Astrocyte of the cerebellum (primary cell): ENCODE measurements at regions of chr7 and their contacts with region 1.

Region 1: GRCh38 chr7:13742811-13743210 is 246.7 kb downstream of the ETV1 start:
- DNase-seq: peak; percentile 52
- H3K4me3 ChIP-seq: no peak overlapping the region
- CTCF ChIP-seq: peak; percentile 62

Region 2: GRCh38 chr7:13540429-13540828 is 202.4 kb before region 1 on chr7:
- in situ Hi-C with region 1: loop called (anchors 25 kb)
- DNase-seq: peak; percentile 1
- H3K4me3 ChIP-seq: no peak overlapping the region
- CTCF ChIP-seq: no peak

Region 3: DNA sequence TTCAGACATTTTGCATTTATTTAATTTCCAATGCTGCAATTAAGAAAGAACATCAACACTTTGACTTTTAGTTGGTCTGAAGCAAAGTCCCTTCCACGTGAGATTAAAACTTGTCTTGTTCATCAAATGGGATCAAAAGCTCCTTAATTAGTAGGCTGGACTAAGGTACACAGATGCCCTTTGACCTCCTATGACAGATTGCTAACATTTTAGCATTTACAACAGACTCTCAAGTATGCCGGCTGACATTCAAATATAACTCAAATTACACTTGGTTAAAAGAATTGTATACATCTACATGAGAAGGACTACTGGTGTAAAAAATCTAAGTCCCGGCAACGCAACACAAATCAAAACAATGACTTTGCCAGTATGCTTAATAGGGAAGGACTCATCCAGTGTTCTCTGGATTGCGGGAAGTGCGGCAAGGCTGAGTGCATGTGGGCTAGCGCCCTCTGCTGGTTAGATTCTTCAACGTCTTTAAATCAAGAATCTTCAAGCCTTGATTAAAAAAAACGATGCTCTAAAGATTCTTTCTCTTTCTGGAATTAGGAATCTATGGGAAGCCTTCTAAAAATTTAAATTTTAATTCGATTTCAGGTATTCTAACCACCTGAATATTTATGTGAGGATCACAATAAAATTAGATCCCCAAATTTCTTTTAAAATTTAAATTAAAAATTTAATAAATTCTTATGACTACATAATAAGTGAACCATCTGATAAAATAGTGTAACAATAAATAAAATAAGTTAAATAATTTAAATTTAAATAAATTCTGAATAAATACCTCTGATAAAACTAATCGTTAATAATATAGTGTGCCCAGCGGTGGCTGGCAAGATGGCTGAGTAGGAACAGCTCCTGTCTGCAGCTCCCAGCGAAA is 715.0 kb after region 1 on chr7:
- in situ Hi-C with region 1: loop called (anchors 25 kb)
- DNase-seq: peak; percentile 81
- H3K4me3 ChIP-seq: no peak overlapping the region
- CTCF ChIP-seq: peak; percentile 76